Calu3 (cell line): ENCODE measurements at regions of chr10 and their contacts with region 1.

Region 1: DNA sequence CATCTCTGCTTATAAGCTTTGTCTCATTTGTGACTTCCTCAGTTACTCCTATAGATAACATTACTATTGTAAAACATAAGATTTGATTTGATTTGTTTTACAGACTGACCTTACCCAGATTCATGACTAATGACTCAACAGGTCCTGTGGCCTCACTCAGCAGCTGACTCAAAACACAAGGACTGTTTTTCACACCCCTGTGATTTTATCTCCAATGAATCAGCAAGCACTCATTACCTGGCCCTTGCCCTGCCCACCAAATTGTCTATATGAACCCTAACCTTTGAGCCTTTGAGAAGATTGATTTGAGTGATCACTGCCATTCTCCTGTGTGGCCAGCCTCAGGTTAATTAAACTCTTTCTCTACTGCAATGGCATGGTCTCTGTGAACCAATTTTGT is 1064.6 kb upstream of the LRRTM3 start:
- DNase-seq: peak; percentile 28
- H3K4me3 Mint-ChIP-seq: no peak overlapping the region
- H3K27ac Mint-ChIP-seq: peak overlapping the region; percentile 5
- H3K4me1 Mint-ChIP-seq: peaks cover 22% of the 10 kb centered on the region
- H3K27me3 Mint-ChIP-seq: no peaks in the 10 kb centered on the region
- CTCF ChIP-seq: no peak

Region 2: DNA sequence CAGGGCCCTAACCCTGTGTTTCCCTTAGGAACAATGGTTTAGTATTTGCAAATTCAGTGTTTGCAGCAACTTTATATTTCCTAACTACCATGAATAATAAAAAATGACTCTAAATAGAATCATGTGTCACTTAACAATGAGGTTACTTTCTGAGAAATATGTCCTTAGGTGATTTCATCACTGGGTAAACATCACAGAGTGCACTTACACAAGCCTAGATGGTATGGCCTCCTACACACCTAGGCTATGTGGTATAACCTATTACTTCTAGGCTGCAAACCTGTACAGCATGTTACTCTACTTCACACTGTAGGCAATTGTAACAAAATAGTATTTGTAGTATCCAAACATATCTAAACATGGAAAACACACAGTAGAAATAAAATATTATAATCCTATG is 110.0 kb before region 1 on chr10:
- CTCF ChIA-PET with region 1: no interaction called
- intact Hi-C with region 1: loop called (anchors 10 kb)
- DNase-seq: peak; percentile 25
- H3K4me3 Mint-ChIP-seq: no peak overlapping the region
- H3K27ac Mint-ChIP-seq: no peak overlapping the region
- H3K4me1 Mint-ChIP-seq: peaks cover 17% of the 10 kb centered on the region
- H3K27me3 Mint-ChIP-seq: no peaks in the 10 kb centered on the region
- CTCF ChIP-seq: no peak

Region 3: DNA sequence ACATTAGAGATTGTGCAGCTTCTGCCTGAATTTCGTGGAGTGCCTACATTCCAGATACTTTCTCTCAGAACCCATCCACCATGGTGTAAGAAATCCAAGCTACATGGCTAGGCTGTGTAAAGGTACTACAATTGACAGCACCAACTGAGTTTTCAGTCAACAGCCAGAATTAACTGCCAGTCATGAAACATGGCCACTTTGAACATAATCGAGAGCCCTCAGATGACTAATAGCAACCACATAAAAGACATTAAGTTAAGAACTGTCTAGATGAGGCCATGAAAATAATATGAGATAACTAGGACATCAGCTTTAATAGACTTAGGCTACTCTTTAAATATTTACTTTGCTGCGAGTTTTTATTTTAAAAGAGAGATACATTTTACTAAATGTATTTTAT is 42.3 kb before region 1 on chr10:
- CTCF ChIA-PET with region 1: no interaction called
- intact Hi-C with region 1: no loop called
- DNase-seq: no peak
- H3K4me3 Mint-ChIP-seq: no peak overlapping the region
- H3K27ac Mint-ChIP-seq: no peak overlapping the region
- H3K4me1 Mint-ChIP-seq: no peaks in the 10 kb centered on the region
- H3K27me3 Mint-ChIP-seq: no peaks in the 10 kb centered on the region
- CTCF ChIP-seq: no peak